Activated T-helper 2 cell treated with anti-CD3 and anti-CD28 coated beads, Interferon-gamma antibody, Interleukin-2, Interleukin-4, amounts not matched to agents 10 μg/mL and 5 μg/mL and 100 μg/mL, durations not matched to agents 14 hours and 24 hours and 36 hours (primary cell): ENCODE measurements at regions of chr12 and their contacts with region 1.

Region 1: DNA sequence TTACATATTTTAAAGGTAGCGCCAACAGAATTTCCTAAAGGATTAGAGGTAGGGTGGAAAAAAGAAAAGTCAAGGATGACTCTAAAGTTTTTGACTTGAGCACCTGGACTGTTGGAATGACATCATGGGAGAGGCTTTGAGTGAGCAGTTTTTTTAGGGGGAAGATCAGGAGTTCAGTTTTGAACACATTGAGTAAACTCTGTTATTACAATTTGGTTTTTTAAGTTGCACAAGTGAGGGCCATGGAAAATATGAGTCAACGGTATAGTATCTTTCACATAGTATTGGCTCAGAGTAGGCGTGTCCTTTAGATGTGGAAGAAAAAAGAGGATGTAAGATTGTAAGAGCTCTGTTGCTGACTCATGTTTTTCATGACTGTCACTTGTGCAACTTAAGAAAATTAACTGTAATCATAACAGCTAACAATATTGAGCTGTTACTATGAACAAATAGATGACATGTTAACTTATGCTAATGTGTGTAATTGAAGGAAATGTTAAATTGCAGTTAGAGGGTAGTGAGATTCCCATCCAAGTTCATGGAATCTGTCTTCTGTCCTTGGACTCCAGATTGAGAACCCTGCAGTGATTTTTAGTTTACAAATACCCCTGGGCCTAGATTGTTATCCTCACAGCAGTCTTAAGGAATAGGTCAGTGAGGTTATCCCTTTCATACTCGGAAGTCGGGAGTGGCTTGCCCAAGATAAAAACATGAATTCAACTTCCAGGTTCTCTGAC is 48.1 kb upstream of the ATP2B1 start:
- DNase-seq: peak; percentile 27
- H3K4me3 Mint-ChIP-seq: no peak overlapping the region
- H3K27ac Mint-ChIP-seq: peak overlapping the region; percentile 56
- H3K4me1 Mint-ChIP-seq: peaks cover 28% of the 10 kb centered on the region
- H3K27me3 Mint-ChIP-seq: peaks cover 2% of the 10 kb centered on the region

Region 2: DNA sequence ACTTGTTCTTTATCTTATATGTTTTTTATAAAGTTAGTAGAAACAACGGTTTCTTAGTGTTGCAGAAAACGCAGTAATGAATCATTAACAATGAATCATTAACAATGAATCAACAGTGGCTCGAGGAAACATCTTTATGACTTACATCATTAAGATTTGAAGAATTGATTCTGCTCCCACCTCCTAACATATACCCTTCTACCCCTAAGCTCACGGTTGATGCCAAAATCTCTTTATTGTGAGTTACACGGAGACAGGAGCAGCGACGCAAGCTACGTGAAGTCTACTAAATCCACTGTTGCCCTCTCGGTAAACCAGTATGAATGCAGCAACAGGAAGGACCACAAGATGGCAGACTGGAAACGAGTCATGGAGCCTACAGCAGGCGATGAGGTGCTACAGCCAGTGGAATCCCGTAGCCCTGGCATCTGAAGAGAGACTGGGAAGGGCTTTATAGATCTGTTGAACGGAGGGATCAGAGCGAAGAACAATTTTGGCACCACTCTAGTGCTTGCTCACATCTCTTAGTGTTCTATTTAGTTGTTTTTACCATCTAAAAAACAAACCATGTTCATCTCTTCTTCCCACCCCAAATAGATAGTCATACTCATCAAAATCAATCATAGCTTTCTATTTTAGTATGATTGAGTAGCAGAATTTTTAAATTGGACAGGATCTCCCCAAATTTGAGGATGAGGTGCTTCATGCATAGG is 737.2 kb before region 1 on chr12:
- intact Hi-C with region 1: loop called (anchors 10 kb)
- DNase-seq: peak; percentile 75
- H3K4me3 Mint-ChIP-seq: no peak overlapping the region
- H3K27ac Mint-ChIP-seq: no peak overlapping the region
- H3K4me1 Mint-ChIP-seq: peaks cover 27% of the 10 kb centered on the region
- H3K27me3 Mint-ChIP-seq: peaks cover 1% of the 10 kb centered on the region

Region 3: GRCh38 chr12:89663577-89664357 is 93.0 kb before region 1 on chr12:
- intact Hi-C with region 1: loop called (anchors 5 kb)
- DNase-seq: no peak
- H3K4me3 Mint-ChIP-seq: peak overlapping the region; percentile 9
- H3K27ac Mint-ChIP-seq: peak overlapping the region; percentile 10
- H3K4me1 Mint-ChIP-seq: peaks cover 26% of the 10 kb centered on the region
- H3K27me3 Mint-ChIP-seq: no peaks in the 10 kb centered on the region

Region 4: GRCh38 chr12:89800435-89800834 is 43.7 kb after region 1 on chr12:
- intact Hi-C with region 1: no loop called
- DNase-seq: no peak
- H3K4me3 Mint-ChIP-seq: no peak overlapping the region
- H3K27ac Mint-ChIP-seq: no peak overlapping the region
- H3K4me1 Mint-ChIP-seq: no peaks in the 10 kb centered on the region
- H3K27me3 Mint-ChIP-seq: no peaks in the 10 kb centered on the region

Region 5: GRCh38 chr12:89862511-89863179 is 105.9 kb after region 1 on chr12:
- intact Hi-C with region 1: loop called (anchors 1 kb)
- DNase-seq: peak; percentile 38
- H3K4me3 Mint-ChIP-seq: peak overlapping the region; percentile 74
- H3K27ac Mint-ChIP-seq: peak overlapping the region; percentile 95
- H3K4me1 Mint-ChIP-seq: peaks cover 44% of the 10 kb centered on the region
- H3K27me3 Mint-ChIP-seq: no peaks in the 10 kb centered on the region

Region 6: GRCh38 chr12:89960011-89960507 is 203.3 kb after region 1 on chr12:
- intact Hi-C with region 1: loop called (anchors 5 kb)
- DNase-seq: no peak
- H3K4me3 Mint-ChIP-seq: no peak overlapping the region
- H3K27ac Mint-ChIP-seq: no peak overlapping the region
- H3K4me1 Mint-ChIP-seq: peaks cover 17% of the 10 kb centered on the region
- H3K27me3 Mint-ChIP-seq: peaks cover 17% of the 10 kb centered on the region